HCT116 (cell line): ENCODE measurements at regions of chr3 and their contacts with region 1.

Region 1: DNA sequence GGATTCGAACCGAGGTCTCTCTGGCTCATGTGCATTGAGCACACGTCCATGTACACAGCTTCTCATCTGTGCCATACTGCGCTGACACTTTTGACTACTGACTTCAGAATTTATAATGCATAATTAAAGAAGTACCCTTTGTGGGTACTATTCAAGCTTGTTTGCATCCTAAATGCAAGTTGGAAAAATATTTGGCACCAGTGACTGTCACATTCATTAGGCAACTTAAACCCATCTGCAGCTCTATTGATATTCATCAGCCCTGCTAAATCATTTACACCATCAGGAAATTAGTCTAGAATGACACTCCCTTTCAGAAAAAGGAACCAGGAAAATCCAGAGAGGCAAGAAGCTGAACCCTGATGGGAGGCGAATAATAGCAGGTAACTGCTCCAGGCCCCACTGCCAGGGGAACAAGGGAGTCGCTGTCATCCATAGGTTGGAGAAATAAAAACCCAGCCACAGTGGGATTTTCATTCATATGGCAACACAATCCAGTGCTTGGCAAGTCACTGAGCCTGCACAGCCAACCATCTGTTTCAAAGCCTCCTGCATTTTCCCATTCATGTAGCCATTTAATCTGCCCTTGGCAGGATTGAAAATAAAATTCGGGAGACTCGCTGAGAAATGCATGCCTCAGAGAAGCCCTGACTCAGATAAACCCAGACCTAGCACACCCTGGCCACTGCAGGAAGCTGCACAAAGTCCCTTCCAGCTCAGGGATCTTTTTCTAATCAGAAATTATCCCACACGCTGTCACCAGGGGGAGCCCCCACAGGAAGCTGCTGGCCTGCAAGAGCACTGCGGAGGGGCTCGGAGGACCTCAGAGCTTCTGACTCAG is 103.0 kb upstream of the VEPH1 start:
- DNase-seq: peak; percentile 54
- ATAC-seq: peak; percentile 97
- H3K4me3 ChIP-seq: no peak overlapping the region
- H3K27ac ChIP-seq: no peak overlapping the region
- H3K4me1 ChIP-seq: peaks cover 0 to 7% of the 10 kb centered on the region in 2 experiments; a peak in 1 of 4 replicates
- H3K27me3 ChIP-seq: no peaks in the 10 kb centered on the region
- CTCF ChIP-seq: peak; percentile 54 to 87 (median 85); a peak in 5 of 6 replicates
- POLR2A ChIP-seq: no peak
- RAD21 ChIP-seq: peak; percentile 56

Region 2: DNA sequence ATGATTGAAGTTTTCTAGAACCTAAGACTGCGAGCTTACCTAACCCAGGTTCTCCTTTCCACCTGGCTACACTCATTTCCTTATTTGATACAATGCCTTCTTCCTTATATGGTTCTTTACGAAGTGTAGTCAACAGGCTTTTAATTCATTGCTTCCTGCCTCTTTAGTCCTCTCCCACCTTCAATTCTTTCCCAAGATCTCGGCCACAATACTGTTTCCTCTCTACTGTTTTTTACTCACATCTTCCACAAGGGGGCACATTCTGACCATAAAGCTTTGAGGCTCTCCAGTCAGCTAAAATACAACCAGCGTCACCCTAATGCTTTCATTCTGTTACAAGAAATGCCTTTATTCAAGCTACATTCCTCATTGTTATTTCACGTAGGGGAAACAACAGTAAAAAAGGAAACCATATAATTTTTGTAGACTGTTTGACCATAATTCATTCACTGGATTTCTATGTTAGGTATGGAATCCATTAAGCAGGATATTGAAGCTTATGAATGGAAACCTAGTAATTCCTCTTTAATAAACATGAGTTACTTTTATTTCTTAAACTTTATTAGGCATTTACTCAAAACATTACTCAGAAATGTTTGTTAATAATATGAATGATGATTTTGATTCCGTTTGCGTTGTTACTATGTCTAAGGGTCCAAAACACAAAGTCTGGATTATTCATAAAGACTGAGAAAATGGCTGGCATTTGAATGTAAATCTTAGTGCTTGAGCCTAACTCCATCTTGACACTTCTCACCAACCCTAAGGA is 73.5 kb before region 1 on chr3:
- CTCF ChIA-PET with region 1: interaction called, 24 read pairs
- POLR2A ChIA-PET with region 1: no interaction called
- RAD21 ChIA-PET with region 1: interaction called in 1 of 2 experiments, 8 read pairs
- intact Hi-C with region 1: no loop called
- DNase-seq: peak; percentile 65
- ATAC-seq: peak; percentile 95
- H3K4me3 ChIP-seq: no peak overlapping the region
- H3K27ac ChIP-seq: no peak overlapping the region
- H3K4me1 ChIP-seq: peaks cover 0 to 7% of the 10 kb centered on the region in 2 experiments; a peak in 2 of 4 replicates
- H3K27me3 ChIP-seq: no peaks in the 10 kb centered on the region
- CTCF ChIP-seq: peak; percentile 73 to 91 (median 85)
- POLR2A ChIP-seq: no peak
- RAD21 ChIP-seq: peak; percentile 90

Region 3: DNA sequence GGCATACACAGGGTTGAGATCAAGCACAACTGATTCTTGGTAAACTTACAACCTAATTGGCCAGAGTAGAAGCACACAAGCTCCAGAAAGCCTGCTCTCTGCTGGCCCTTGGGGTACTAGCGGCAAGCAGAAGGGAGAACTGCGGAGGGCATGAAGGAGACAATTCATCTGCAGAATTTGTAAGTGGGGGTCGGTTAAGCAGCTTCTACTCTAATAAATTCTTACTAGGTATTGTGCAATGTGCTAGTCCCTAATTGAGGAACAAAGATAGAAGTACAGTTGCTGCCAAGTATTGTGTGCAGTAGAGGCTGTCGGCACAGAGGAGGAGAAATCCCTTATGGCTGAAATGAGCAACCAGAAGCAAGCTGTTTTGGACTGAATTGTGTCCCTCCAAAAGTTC is 11.8 kb before region 1 on chr3:
- CTCF ChIA-PET with region 1: interaction called, 13 read pairs
- POLR2A ChIA-PET with region 1: no interaction called
- RAD21 ChIA-PET with region 1: no interaction called
- intact Hi-C with region 1: no loop called
- DNase-seq: no peak
- ATAC-seq: peak; percentile 72
- H3K4me3 ChIP-seq: no peak overlapping the region
- H3K27ac ChIP-seq: no peak overlapping the region
- H3K4me1 ChIP-seq: no peaks in the 10 kb centered on the region
- H3K27me3 ChIP-seq: no peaks in the 10 kb centered on the region
- CTCF ChIP-seq: peak in 1 of 3 experiments; percentile 37; a peak in 1 of 6 replicates
- POLR2A ChIP-seq: no peak
- RAD21 ChIP-seq: no peak

Region 4: DNA sequence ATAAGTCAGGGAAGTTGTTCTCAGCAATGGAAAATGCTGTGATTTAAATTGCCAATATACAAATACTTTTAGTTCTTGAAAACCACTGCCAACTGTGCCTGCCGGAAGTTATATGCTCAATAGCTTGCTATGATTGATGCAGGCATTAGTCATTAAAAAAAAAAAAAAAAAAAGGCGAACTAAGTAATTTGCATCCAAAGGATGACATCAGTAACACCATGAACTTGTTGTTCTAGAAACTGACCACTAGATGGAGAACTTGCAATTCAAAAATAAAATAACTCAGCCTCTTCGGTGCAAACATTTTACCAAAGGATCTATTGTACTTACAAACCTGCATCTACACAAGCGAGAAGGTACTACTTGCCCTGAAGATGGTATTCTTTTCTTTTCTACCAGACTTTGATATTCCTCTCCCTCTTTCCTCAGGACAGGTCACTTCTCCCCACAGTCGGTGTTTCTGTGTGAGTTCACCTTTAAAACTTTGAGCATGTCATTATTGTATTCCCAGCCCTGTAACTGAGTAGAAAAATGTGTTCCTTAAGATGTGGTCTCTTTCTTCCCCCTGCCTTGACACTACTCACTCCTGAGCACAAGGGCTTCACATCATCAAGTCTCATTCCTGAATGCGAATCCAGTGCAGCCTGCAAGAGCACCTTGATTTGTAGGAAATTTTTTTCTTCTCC is 12.0 kb after region 1 on chr3:
- CTCF ChIA-PET with region 1: interaction called, 21 read pairs
- POLR2A ChIA-PET with region 1: no interaction called
- RAD21 ChIA-PET with region 1: no interaction called
- intact Hi-C with region 1: no loop called
- DNase-seq: peak; percentile 61
- ATAC-seq: peak; percentile 80
- H3K4me3 ChIP-seq: no peak overlapping the region
- H3K27ac ChIP-seq: no peak overlapping the region
- H3K4me1 ChIP-seq: peaks cover 0 to 5% of the 10 kb centered on the region in 2 experiments; a peak in 1 of 4 replicates
- H3K27me3 ChIP-seq: no peaks in the 10 kb centered on the region
- CTCF ChIP-seq: peak; percentile 53 to 71 (median 57); a peak in 5 of 6 replicates
- POLR2A ChIP-seq: no peak
- RAD21 ChIP-seq: peak; percentile 81

Region 5: GRCh38 chr3:157844800-157845565 is 238.8 kb after region 1 on chr3:
- CTCF ChIA-PET with region 1: no interaction called
- POLR2A ChIA-PET with region 1: no interaction called
- RAD21 ChIA-PET with region 1: no interaction called
- intact Hi-C with region 1: no loop called
- DNase-seq: no peak
- ATAC-seq: no peak
- H3K4me3 ChIP-seq: no peak overlapping the region
- H3K27ac ChIP-seq: no peak overlapping the region
- H3K4me1 ChIP-seq: no peaks in the 10 kb centered on the region
- H3K27me3 ChIP-seq: no peaks in the 10 kb centered on the region
- CTCF ChIP-seq: no peak
- POLR2A ChIP-seq: no peak
- RAD21 ChIP-seq: no peak

Region 6: DNA sequence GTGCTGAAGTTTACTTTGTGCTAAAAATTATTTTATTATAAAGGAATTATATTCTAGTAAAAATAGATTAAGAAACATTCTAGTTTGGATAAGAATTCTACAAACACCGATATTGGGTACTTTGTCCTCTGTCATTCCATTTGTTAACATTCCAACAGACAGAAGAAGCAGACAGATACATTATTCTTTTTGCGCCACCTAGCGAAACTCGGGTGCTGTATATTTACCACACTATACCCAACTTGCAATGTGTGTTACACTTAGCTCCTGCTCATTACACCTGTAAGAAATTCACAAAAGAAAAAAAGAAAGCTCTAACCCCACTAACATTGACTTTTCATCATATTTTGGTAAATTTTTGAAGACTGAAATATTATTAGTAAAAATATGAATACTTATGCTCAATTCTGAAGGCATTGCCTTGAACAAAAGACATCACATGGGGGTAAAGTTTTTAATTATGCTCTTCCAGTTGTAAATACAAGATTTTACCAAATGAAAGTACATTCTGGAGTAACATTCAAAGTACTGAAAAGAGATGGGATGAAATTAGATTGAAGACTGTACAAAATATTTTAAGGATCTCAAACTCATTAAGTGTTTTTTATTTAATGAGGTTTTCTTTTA is 828.3 kb after region 1 on chr3:
- CTCF ChIA-PET with region 1: interaction called, 19 read pairs
- POLR2A ChIA-PET with region 1: interaction called, 3 read pairs
- RAD21 ChIA-PET with region 1: no interaction called
- intact Hi-C with region 1: no loop called
- DNase-seq: peak; percentile 37
- ATAC-seq: peak; percentile 87
- H3K4me3 ChIP-seq: no peak overlapping the region
- H3K27ac ChIP-seq: no peak overlapping the region
- H3K4me1 ChIP-seq: no peaks in the 10 kb centered on the region
- H3K27me3 ChIP-seq: no peaks in the 10 kb centered on the region
- CTCF ChIP-seq: peak; percentile 62 to 77 (median 70); a peak in 5 of 6 replicates
- POLR2A ChIP-seq: no peak
- RAD21 ChIP-seq: peak; percentile 81

Region 7: DNA sequence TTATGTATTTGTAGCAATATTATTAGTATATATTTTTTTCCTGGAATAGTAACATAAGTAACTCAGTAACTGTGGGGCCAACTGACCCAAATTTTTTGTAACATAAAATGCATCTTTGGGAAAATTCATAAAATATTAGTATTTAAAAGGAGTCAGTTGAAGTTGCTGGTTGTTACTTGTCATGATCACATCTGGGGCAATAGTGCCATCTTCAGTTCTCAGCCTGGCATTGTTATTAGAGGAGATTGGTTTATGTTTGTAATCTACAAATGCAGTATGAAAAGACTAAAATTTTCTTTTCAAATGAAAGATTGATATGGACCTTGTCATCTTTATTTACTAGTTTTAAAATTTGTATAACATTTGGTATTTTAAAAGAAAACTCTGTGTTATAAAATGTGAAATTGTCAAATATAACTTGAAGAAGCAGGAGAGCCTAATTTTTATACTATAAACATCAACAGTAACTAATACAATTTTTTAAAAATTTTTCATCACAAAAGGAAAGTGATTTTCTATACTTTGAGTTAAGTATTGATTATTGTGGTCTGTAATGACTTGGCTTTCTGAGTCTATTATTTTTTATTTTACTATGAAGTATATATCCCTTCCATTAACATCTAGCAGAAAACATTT is 926.0 kb after region 1 on chr3:
- CTCF ChIA-PET with region 1: interaction called, 24 read pairs
- POLR2A ChIA-PET with region 1: no interaction called
- RAD21 ChIA-PET with region 1: interaction called in 1 of 2 experiments, 3 read pairs
- intact Hi-C with region 1: loop called (anchors 1 kb)
- DNase-seq: peak; percentile 41
- ATAC-seq: peak; percentile 62; the same call in 1 of the 2 replicates
- H3K4me3 ChIP-seq: no peak overlapping the region
- H3K27ac ChIP-seq: no peak overlapping the region
- H3K4me1 ChIP-seq: no peaks in the 10 kb centered on the region
- H3K27me3 ChIP-seq: no peaks in the 10 kb centered on the region
- CTCF ChIP-seq: peak; percentile 54 to 67 (median 63); a peak in 5 of 6 replicates
- POLR2A ChIP-seq: no peak
- RAD21 ChIP-seq: peak; percentile 80